Ascending aorta (tissue), 2 donors: ENCODE measurements at regions of chr6 and their contacts with region 1.

Region 1: DNA sequence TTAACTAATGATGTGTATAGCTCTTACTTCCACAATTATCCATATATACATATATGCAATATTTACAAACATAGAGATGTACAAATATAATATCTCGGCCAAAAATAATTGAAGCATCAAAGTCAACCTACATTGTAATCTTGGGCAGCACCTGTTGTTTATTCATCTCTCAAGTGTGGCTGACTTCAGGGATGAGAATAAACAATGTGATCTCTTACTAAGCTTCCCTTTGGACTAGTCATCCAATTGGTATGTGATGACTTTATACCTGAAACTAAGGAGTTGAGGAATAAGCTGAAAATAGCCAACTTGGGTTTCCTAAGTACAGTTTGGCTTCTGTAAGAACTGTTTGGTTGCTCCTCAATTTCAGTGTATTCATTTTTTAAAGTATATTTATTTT is 256.6 kb downstream of the KHDC1L start:
- DNase-seq: no peak
- H3K4me3 ChIP-seq: no peak overlapping the region
- H3K27ac ChIP-seq: no peak overlapping the region
- H3K4me1 ChIP-seq: peaks cover under 1% of the 10 kb centered on the region in 2 donors
- H3K27me3 ChIP-seq: no peaks in the 10 kb centered on the region
- CTCF ChIP-seq: no peak

Region 2: GRCh38 chr6:73032586-73032985 is 63.9 kb after region 1 on chr6:
- intact Hi-C with region 1: no loop called
- DNase-seq: no peak
- H3K4me3 ChIP-seq: no peak overlapping the region
- H3K27ac ChIP-seq: no peak overlapping the region
- H3K4me1 ChIP-seq: no peaks in the 10 kb centered on the region
- H3K27me3 ChIP-seq: no peaks in the 10 kb centered on the region
- CTCF ChIP-seq: no peak

Region 3: DNA sequence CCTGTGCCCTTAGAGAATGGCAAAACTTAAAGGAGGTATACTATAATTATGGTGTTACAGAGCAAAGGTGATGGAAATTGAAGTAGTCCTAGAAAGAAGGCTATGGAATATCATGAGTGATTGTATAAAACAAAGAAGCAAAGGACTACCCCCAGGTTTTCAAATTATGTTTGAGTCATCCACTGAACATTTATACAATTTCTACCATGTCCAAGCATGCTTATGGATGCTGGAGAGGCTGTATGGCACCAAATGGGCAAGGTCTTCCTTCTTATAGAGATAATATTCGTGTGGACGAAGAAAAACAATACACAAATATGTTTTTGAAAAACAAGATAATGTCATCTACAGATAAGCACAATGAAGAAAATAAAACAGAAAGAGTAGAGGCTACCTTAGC is 79.1 kb after region 1 on chr6:
- intact Hi-C with region 1: loop called (anchors 5 kb)
- DNase-seq: no peak
- H3K4me3 ChIP-seq: no peak overlapping the region
- H3K27ac ChIP-seq: no peak overlapping the region
- H3K4me1 ChIP-seq: peaks cover 4 to 15% of the 10 kb centered on the region in 2 donors
- H3K27me3 ChIP-seq: no peaks in the 10 kb centered on the region
- CTCF ChIP-seq: no peak